IMR-90 (cell line): ENCODE measurements at regions of chr17 and their contacts with region 1.

Region 1: DNA sequence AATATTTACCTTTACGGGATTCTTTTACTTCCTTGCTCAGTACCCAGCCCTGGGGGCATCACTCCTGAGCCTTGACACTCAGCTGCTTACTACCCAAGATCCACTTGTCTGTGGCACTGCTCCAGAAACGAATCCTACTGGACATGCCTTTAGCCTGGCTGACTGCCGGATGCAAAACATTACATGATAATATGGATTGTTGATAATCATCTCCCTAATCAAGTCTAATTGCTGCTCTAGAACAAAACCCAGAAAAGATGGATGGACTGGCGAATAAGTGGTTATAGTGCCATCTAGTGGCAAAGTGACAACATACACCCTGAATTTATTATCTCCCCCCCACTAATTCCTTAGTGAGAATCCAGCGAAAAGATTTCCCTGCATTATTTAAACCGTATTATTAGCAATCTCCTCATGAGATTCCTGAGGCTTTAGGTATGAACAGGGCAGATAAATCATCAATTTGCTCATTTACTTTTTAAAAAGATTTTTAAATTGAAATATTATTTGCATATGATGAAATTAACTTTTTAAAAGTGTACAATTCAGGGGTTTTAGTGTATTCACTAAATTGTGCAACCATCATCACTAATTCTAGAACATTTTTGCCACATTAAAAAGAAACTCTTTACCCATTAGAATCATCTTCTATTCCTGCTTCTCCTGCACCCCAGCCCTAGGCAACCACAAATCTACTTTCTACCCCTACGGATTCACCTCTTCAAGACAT is 61.6 kb downstream of the RGS9 start:
- DNase-seq: peak; percentile 69
- ATAC-seq: peak; percentile 70; the same call in 1 of the 2 replicates
- H3K4me3 ChIP-seq: no peak overlapping the region
- H3K27ac ChIP-seq: no peak overlapping the region
- H3K4me1 ChIP-seq: no peaks in the 10 kb centered on the region; the same call in 1 of the 2 replicates
- H3K27me3 ChIP-seq: no peaks in the 10 kb centered on the region; the same call in 1 of the 2 replicates
- CTCF ChIP-seq: peak; percentile 89
- POLR2A ChIP-seq: no peak
- RAD21 ChIP-seq: peak; percentile 91

Region 2: GRCh38 chr17:64773836-64774761 is 424.7 kb before region 1 on chr17:
- CTCF ChIA-PET with region 1: no interaction called
- POLR2A ChIA-PET with region 1: no interaction called
- dilution Hi-C with region 1: no loop called
- in situ Hi-C with region 1: no loop called
- intact Hi-C with region 1: loop called (anchors 10 kb)
- DNase-seq: peak; percentile 75
- ATAC-seq: peak; percentile 67
- H3K4me3 ChIP-seq: no peak overlapping the region
- H3K27ac ChIP-seq: no peak overlapping the region; the same call in 1 of the 2 replicates
- H3K4me1 ChIP-seq: peaks cover 11% of the 10 kb centered on the region
- H3K27me3 ChIP-seq: no peaks in the 10 kb centered on the region
- CTCF ChIP-seq: peak; percentile 58
- POLR2A ChIP-seq: no peak
- RAD21 ChIP-seq: peak; percentile 77

Region 3: DNA sequence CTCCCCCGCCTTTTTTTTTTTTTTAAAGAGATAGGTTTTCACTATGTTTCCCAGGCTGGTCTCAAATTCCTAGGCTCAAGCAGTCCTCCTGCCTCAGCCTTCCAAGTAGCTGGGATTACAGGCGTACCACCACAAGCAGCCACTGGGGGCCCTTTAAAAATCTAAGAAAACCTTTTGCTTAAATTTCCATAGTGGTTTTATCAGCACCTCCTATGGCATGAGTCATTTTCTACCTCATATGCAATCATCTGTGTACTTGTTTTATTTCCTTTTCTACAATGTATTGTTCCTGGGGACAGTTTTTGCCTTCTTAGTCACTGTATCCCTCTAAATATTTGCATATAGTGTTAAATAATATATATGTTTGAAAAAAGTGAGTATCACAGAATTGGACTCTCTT is 171.5 kb before region 1 on chr17:
- CTCF ChIA-PET with region 1: no interaction called
- POLR2A ChIA-PET with region 1: no interaction called
- dilution Hi-C with region 1: no loop called
- in situ Hi-C with region 1: no loop called
- intact Hi-C with region 1: loop called (anchors 10 kb)
- DNase-seq: peak; percentile 83
- ATAC-seq: peak; percentile 75
- H3K4me3 ChIP-seq: no peak overlapping the region
- H3K27ac ChIP-seq: no peak overlapping the region
- H3K4me1 ChIP-seq: peaks cover 12% of the 10 kb centered on the region
- H3K27me3 ChIP-seq: no peaks in the 10 kb centered on the region
- CTCF ChIP-seq: peak; percentile 47
- POLR2A ChIP-seq: no peak
- RAD21 ChIP-seq: peak; percentile 41

Region 4: DNA sequence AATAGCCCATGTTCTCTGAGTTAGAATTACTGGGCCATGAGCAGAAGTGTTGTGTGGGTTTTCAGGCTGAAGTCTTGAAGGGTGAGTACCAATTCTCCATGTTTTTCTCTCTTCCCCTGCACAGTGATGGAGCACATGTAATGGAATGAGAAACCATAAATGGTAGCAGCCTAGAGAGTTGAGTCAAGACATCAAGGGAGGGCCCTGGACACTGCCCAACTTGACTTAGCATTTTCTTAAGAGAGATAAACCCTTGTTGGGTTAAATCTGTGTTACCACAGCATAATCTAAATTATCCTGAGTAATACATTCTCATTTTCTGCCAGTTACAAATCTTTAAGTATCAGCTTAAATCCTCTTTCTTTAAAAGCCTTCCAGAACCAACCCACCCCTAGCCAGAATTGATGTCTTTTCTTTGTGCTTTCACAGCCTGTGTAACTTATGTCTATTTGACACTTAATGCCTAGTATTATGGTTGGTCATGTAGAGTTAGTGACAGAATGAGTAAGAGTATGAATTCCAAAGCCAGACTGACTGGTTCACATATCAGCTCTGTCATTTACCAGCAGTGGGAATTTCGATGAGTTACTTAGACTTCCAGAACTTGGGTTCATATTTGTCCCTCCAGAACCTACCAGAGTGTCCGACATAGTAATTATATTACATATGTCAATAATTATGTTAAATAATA is 88.7 kb before region 1 on chr17:
- CTCF ChIA-PET with region 1: no interaction called
- POLR2A ChIA-PET with region 1: no interaction called
- dilution Hi-C with region 1: no loop called
- in situ Hi-C with region 1: no loop called
- intact Hi-C with region 1: loop called (anchors 5 kb)
- DNase-seq: peak; percentile 31
- ATAC-seq: no peak
- H3K4me3 ChIP-seq: no peak overlapping the region
- H3K27ac ChIP-seq: no peak overlapping the region
- H3K4me1 ChIP-seq: peaks cover 4% of the 10 kb centered on the region
- H3K27me3 ChIP-seq: no peaks in the 10 kb centered on the region; the same call in 1 of the 2 replicates
- CTCF ChIP-seq: no peak
- POLR2A ChIP-seq: no peak
- RAD21 ChIP-seq: no peak

Region 5: GRCh38 chr17:65301184-65301583 is 102.4 kb after region 1 on chr17:
- CTCF ChIA-PET with region 1: no interaction called
- POLR2A ChIA-PET with region 1: no interaction called
- dilution Hi-C with region 1: no loop called
- in situ Hi-C with region 1: no loop called
- intact Hi-C with region 1: no loop called
- DNase-seq: no peak
- ATAC-seq: no peak
- H3K4me3 ChIP-seq: no peak overlapping the region
- H3K27ac ChIP-seq: no peak overlapping the region
- H3K4me1 ChIP-seq: no peaks in the 10 kb centered on the region
- H3K27me3 ChIP-seq: peaks cover 9% of the 10 kb centered on the region
- CTCF ChIP-seq: no peak
- POLR2A ChIP-seq: no peak
- RAD21 ChIP-seq: no peak